ENCODE measurements at regions of chr9 and their contacts with region 1.

Region 1: DNA sequence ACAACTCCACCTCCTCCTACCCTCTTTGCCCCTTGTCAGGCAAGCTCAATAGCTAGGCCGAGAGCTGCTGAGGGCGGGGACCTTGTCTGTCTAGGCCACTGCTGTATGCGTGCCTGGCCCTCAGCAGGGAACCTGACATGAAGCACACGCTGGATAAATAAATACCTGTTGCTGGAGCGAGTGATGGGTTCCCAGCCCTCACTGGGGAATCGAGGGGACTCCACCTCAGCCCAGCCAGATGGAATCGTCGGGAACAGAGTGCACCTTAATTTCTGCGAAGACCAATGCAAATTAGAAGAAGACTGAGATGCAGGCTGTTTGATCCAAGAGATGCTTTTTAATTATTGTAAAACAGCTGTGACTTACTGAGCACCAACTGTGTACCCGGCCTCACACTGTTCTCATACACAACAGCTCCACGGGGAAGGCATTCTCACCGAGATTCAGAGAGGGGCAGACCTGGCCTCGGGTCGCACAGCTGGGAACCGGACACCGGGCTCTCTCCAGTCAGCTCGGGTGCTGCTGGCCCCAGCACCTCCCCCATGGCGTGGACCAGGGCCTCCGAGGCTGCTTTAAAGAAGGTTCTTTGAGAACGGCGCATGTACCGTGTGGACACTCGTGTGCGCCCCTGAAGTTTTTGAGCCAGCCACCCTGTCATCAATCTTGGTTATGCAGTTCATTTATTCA is 109.7 kb upstream of the IER5L start:
- DNase-seq: peak in 1 of 2 donors; percentile 41
- H3K4me3 ChIP-seq: no peak overlapping the region
- H3K27ac ChIP-seq: no peak overlapping the region
- H3K4me1 ChIP-seq: no peaks in the 10 kb centered on the region
- H3K27me3 ChIP-seq: no peaks in the 10 kb centered on the region
- CTCF ChIP-seq: no peak

Region 2: DNA sequence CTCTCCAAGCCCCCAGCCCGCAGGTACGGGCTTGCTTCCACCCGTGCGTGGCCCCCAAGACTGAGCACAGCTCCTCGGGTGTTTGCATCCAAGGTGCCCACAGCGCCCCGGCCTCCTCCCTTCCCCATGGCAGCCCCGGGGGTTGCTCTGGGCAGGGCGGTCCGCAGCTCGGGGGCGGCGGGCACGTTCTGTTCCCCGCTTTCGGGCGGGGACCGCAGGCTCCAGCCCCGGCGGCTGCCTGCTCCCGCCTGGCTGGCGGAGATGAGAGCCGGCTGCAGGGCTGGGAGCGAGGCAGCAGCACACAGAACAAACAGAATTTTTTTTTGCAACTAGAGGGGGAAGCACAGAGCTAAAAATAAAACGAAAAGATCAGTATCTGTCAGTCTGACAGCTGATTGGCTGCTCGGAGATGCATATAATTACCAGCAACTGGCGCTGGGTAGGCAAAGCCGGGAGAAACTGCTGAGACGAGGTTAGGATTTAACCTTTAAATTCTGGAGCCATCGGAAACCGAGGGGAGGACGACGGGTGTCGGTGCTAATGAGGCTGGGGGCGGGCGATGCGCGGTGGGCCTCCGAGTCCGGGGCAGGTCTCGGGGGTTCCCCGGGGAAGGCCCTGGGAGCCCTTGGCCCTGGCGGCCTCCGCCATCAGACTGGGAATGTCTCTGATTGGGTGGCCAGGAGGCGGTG is 33.0 kb after region 1 on chr9:
- intact Hi-C with region 1: loop called (anchors 1 kb)
- DNase-seq: peak in 1 of 2 donors; percentile 88
- H3K4me3 ChIP-seq: peak overlapping the region; percentile 54 to 60
- H3K27ac ChIP-seq: peak overlapping the region; percentile 92 to 94
- H3K4me1 ChIP-seq: peaks cover 30 to 66% of the 10 kb centered on the region in 2 donors
- H3K27me3 ChIP-seq: no peaks in the 10 kb centered on the region
- CTCF ChIP-seq: peak in 2 of 3 experiments; percentile 2 to 17

Region 3: GRCh38 chr9:129352146-129352865 is 64.5 kb after region 1 on chr9:
- intact Hi-C with region 1: loop called (anchors 10 kb)
- DNase-seq: no peak
- H3K4me3 ChIP-seq: peak overlapping the region; percentile 39 to 63
- H3K27ac ChIP-seq: peak overlapping the region; percentile 22 to 49
- H3K4me1 ChIP-seq: peaks cover 10 to 22% of the 10 kb centered on the region in 2 donors
- H3K27me3 ChIP-seq: no peaks in the 10 kb centered on the region
- CTCF ChIP-seq: no peak